ENCODE measurements at regions of chr10 and their contacts with region 1.

Region 1: GRCh38 chr10:77716482-77717317 is 79.1 kb upstream of the KCNMA1 start:
- DNase-seq: no peak
- H3K27ac ChIP-seq: no peak overlapping the region
- CTCF ChIP-seq: no peak

Region 2: GRCh38 chr10:77756319-77757232 is 39.9 kb after region 1 on chr10:
- CTCF ChIA-PET with region 1: interaction called, 22 read pairs
- POLR2A ChIA-PET with region 1: no interaction called
- DNase-seq: peak; percentile 70
- H3K27ac ChIP-seq: no peak overlapping the region
- CTCF ChIP-seq: peak; percentile 72

Region 3: DNA sequence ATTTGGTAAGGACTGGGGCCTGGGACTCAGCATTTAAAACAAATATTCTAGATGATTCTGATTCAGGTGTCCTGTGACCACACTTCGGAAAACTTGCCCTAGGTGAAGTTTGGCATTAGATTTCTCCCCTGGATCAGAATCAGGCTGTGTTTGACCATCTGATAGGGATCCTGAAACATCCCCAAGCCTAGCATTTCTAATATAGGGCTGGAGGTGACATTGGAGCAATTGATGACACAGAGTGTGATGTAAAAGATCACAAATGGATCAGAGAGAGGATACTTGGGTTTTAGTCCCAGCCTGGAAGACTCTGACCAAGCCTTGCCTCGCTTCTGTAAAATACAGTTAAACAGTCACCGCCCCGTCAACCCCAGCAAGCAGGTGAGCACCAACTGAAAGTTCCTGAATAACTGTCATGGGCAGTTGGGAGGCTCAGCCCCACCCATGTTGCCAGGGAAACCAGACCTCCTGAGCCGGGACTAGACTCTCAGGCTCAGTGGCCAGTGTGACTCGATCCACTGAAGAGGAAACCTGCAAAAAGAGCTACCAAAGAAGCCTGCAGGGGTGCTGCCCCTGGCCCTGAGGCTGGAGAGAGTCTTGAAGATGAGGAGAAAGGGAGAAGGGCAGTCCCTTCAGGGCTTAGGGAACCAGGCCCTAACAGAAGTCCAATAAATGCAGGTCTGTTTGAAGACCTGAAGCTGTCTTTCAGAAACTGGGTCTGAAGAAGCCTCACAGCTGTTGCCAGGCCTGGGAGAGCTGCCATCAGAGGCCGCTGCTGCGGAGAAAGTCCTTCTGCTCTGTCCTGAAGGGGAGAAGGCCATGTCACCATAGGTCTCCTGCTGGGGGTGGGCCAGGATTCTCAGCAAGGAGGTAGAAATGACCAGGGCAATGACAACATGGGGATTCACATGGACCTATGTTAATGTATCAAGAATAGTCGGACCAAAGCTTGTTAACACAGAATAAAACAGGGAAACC is 47.0 kb after region 1 on chr10:
- CTCF ChIA-PET with region 1: interaction called, 15 read pairs
- POLR2A ChIA-PET with region 1: no interaction called
- DNase-seq: no peak
- H3K27ac ChIP-seq: peak overlapping the region; percentile 7; the same call in 1 of the 2 replicates
- CTCF ChIP-seq: no peak

Region 4: DNA sequence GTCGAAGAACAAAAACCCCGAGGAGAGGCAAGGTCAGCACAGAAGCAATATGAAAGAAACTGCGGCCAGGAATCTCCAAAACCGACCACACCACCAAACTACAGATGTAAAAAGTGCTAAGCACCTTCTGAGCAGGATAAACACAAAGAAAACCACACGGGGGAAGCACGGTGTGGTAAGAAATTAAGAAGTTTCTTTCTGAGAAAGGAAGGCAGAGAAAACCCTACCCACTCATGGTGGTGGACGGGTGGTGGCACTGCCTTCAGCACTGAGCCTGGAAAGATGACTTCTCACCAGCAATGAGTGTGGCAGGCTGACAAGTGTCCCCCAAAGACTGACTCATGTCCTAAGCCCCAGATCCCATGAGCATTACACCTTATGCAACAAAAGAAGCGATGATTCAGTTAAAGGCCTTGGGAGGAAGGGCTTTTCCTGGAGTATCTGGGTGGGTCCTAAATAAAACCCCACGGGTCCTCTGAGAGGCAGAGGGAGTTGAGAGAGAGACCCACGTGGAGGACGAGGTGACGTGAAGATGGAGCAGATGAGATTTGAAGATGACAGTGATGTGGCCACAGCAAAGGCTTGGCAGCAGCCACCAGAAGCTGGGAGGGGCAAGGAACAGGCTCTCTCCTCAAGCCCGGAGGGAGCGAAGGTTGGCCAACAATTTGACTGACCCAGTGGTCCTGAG is 84.9 kb after region 1 on chr10:
- CTCF ChIA-PET with region 1: no interaction called
- POLR2A ChIA-PET with region 1: no interaction called
- DNase-seq: peak; percentile 25
- H3K27ac ChIP-seq: peak overlapping the region; percentile 38
- CTCF ChIP-seq: no peak

Region 5: DNA sequence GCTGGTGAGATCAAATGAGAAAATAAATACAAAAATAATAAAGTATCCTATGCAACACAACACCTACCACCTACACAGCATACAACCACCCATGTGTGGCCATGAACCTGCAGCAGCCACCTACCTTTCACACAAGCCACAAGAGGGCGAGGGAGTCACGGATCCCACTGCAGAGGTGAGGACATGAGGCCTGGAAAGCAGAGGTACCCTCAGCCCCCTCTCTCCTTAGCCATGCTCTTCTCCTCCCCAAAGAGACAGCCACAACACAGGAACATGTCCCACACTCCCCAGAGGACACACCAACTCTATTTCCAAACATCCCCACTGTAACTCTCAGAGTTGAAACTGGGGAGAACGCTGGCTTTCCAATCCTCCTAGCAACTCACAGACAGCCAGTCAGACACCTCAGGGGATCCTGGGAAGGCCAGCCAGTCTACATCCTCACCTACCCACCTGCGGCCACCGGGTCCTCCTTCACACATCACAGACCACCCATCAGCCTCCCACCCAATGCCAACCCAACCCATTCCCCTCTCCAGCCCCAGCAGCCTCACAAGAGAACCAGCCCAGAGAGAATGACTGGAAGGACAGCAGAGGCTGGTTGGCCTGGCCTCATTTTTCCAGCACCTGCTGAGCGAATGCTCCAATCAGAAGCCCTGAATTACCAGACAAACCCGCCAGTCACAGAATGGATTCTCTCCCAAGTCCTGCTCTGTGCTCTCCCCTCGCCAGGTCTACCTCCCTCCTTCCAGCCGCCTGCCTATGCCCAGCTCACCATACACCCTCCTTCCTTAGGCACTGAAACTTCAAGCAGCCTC is 191.4 kb after region 1 on chr10:
- CTCF ChIA-PET with region 1: no interaction called
- POLR2A ChIA-PET with region 1: no interaction called
- DNase-seq: no peak
- H3K27ac ChIP-seq: peak overlapping the region; percentile 45
- CTCF ChIP-seq: no peak

Measured in RWPE1 (cell line).